ENCODE measurements at regions of chr7 and their contacts with region 1.

Region 1: GRCh38 chr7:106425017-106425719 is 140.4 kb upstream of the NAMPT start:
- DNase-seq: peak; percentile 89
- ATAC-seq: peak; percentile 79
- H3K4me3 Mint-ChIP-seq: peak overlapping the region; percentile 70
- H3K27ac Mint-ChIP-seq: peak overlapping the region; percentile 99
- H3K4me1 Mint-ChIP-seq: peaks cover 88% of the 10 kb centered on the region
- H3K27me3 Mint-ChIP-seq: peaks cover 2% of the 10 kb centered on the region

Region 2: GRCh38 chr7:106071356-106071998 is 353.7 kb before region 1 on chr7:
- CTCF ChIA-PET with region 1: no interaction called
- POLR2A ChIA-PET with region 1: no interaction called
- intact Hi-C with region 1: loop called in 1 of 2 experiments (anchors 5 kb)
- DNase-seq: peak; percentile 71
- ATAC-seq: peak; percentile 98
- H3K4me3 Mint-ChIP-seq: peak overlapping the region; percentile 60
- H3K27ac Mint-ChIP-seq: peak overlapping the region; percentile 95
- H3K4me1 Mint-ChIP-seq: peaks cover 35% of the 10 kb centered on the region
- H3K27me3 Mint-ChIP-seq: no peaks in the 10 kb centered on the region

Region 3: DNA sequence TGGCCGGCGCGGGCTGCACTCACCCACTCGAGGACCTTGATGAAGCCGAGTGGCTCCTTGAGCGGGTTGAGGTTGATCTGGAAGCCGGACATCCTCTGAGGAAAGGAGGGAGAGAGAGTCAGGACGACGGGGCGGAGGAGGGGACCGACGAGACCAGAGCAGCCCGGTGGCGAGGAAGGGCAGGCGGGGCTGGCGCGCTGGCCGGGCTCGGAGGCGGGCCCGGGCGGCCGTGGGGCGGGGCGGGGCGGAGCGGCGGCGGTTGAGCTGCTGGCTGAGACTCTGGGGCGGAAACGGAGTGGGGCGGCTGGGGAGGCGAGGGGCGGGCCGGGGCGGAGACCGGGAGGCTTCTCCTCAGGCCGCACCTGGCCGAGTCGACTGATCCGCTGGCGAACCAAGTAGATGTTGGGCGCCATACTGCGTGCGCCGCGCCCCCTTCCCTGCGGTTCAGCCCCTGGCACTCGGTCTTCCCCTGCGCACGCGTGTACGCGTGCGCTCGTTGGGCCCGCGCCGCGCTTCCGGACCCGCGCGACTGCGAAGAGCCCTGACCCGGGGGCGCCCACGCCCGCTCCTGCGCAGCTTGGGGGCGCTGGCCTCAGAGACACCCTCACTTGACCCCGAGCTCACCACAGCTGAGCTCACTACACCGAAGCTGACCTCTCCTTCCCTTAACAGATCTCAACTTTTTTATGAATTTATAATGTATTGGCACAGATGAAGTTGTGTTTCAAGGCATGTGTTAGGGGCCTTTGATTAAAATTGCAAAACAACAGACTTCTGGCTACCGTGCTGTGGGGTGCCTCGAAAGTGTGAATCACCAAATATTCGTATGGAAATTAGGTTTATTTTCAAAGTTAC is 312.8 kb before region 1 on chr7 and contains the start of gene SYPL1:
- CTCF ChIA-PET with region 1: no interaction called
- POLR2A ChIA-PET with region 1: no interaction called
- intact Hi-C with region 1: no loop called
- DNase-seq: peak; percentile 95
- ATAC-seq: peak; percentile 86
- H3K4me3 Mint-ChIP-seq: peak within 1 kb of the TSS; percentile 79
- H3K27ac Mint-ChIP-seq: peak within 1 kb of the TSS; percentile 89
- H3K4me1 Mint-ChIP-seq: peaks cover 64% of the 10 kb centered on the region
- H3K27me3 Mint-ChIP-seq: no peaks in the 10 kb centered on the region
- total RNA-seq, gene SYPL1: 23.7 to 28.8 TPM

Region 4: DNA sequence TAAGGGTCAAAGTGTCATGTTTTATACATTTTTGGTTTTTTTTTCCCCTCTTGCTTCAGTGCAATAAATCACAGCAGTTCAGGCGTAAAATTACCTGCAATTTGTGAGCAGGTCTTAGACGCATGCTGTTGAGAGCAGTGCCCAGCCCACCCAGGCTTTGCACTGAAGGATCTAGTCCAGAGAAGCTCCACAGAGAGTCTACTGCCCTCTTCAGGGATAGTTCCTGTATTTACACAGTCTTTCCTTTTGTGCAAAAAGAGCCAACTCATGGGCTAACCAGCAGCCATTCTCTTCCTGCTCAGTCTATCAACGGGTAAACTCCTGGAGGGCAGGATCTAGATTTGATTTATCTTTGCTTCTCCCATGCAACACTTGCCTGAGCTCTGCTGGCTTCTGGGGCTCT is 58.1 kb before region 1 on chr7:
- CTCF ChIA-PET with region 1: no interaction called
- POLR2A ChIA-PET with region 1: no interaction called
- intact Hi-C with region 1: loop called (anchors 2 to 5 kb)
- DNase-seq: no peak
- ATAC-seq: peak; percentile 40
- H3K4me3 Mint-ChIP-seq: no peak overlapping the region
- H3K27ac Mint-ChIP-seq: no peak overlapping the region
- H3K4me1 Mint-ChIP-seq: peaks cover 38% of the 10 kb centered on the region
- H3K27me3 Mint-ChIP-seq: peaks cover 20% of the 10 kb centered on the region

Region 5: DNA sequence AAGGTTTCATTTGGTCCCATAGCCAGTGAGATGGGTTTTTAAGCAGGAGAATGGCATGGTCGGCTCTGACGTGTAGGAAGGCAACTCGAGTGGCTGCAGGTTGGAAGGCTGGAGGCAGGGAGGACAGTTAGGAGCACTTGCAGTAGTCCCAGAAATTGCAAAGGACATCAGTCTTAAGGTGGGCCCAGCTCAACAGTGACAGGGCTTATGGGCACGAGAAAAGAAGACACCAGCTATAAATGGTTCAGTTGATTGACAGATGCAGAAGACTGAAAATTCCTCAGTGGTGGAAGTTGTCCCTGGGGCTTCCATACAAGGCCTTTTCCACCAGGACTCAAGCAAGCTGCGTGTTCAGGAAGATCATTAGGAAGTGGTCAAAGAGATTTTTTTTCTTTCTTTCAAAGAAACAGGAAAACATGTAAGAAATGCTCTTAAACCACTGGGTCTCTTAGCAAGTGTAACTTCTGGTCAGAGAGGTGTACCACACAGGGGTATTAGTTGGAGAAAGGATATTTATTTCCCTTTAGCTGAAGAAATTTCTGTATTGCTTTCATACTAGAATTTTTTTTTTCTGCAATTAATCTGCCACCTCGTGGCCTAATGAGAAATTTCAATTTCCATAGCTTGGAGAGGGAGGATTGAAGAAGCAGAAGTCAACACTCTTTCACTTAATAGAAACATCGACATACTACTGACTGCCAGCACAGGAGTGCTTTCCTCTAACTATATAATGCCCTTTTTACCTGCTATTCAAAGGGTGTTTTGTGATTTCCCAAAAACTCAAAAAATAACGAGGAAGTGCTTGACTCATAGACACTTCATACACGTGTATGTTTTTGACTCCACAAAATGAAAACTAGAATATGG is 37.1 kb after region 1 on chr7:
- CTCF ChIA-PET with region 1: interaction called, 15 read pairs
- POLR2A ChIA-PET with region 1: interaction called, 10 read pairs
- intact Hi-C with region 1: loop called (anchors 2 kb)
- DNase-seq: no peak
- ATAC-seq: peak; percentile 69
- H3K4me3 Mint-ChIP-seq: peak overlapping the region; percentile 8
- H3K27ac Mint-ChIP-seq: peak overlapping the region; percentile 75
- H3K4me1 Mint-ChIP-seq: peaks cover 36% of the 10 kb centered on the region
- H3K27me3 Mint-ChIP-seq: no peaks in the 10 kb centered on the region

Region 6: DNA sequence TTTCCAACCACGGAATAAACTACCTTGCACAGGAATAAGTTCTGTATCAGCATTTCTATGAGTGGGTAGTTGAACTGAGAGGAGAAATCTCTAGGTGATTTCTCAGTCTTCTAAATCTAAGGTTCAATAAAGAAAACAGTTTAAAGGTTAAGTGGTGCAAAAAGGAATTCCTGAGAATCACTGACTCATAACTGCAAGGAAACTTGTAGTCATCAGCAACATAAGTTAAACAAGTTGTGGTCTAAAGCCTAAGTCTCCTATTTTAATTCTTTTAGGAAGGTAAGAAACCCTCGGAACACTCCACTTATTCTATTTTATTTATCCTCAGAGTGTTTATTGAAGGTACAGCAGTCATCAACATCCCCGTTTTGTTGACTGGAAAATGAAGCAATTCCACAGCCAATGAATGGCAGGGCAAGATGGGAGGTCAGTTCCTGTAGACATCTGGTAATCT is 347.5 kb after region 1 on chr7:
- CTCF ChIA-PET with region 1: no interaction called
- POLR2A ChIA-PET with region 1: no interaction called
- intact Hi-C with region 1: loop called in 1 of 2 experiments (anchors 2 kb)
- DNase-seq: no peak
- ATAC-seq: peak; percentile 79
- H3K4me3 Mint-ChIP-seq: peak overlapping the region; percentile 27
- H3K27ac Mint-ChIP-seq: peak overlapping the region; percentile 91
- H3K4me1 Mint-ChIP-seq: peaks cover 66% of the 10 kb centered on the region
- H3K27me3 Mint-ChIP-seq: no peaks in the 10 kb centered on the region

Measured in activated CD4-positive, alpha-beta T cell treated with anti-CD3 and anti-CD28 coated beads for 36 hours (primary cell).